GM18951 (cell line): ENCODE measurements at regions of chr4 and their contacts with region 1.

Region 1: GRCh38 chr4:10403633-10404445 is 53.4 kb downstream of the ZNF518B start:
- POLR2A ChIP-seq: no peak

Region 2: GRCh38 chr4:10173037-10173753 is 230.6 kb before region 1 on chr4:
- in situ Hi-C with region 1: loop called (anchors 10 kb)
- POLR2A ChIP-seq: no peak